Right lobe of liver (tissue), 6 donors: ENCODE measurements at regions of chr7 and their contacts with region 1.

Region 1: GRCh38 chr7:148286150-148286549 is 304.4 kb upstream of the C7orf33 start:
- DNase-seq: no peak
- ATAC-seq: peak; percentile 90 to 95 (median 94)
- H3K4me3 ChIP-seq: no peak overlapping the region
- H3K27ac ChIP-seq: no peak overlapping the region
- H3K4me1 ChIP-seq: no peaks in the 10 kb centered on the region
- H3K27me3 ChIP-seq: no peaks in the 10 kb centered on the region
- CTCF ChIP-seq: peak; percentile 57 to 77 (median 68)
- POLR2A ChIP-seq: no peak

Region 2: GRCh38 chr7:148480479-148481146 is 194.5 kb after region 1 on chr7:
- intact Hi-C with region 1: loop called in 1 of 2 experiments (anchors 5 kb)
- DNase-seq: no peak
- ATAC-seq: peak; percentile 61 to 66 (median 64)
- H3K4me3 ChIP-seq: peak overlapping the region in 2 of 3 donors; percentile 17 to 22
- H3K27ac ChIP-seq: peak overlapping the region in 2 of 3 donors; percentile 63 to 89
- H3K4me1 ChIP-seq: peaks cover 0 to 33% (median 11%) of the 10 kb centered on the region in 4 donors
- H3K27me3 ChIP-seq: no peaks in the 10 kb centered on the region
- CTCF ChIP-seq: no peak
- POLR2A ChIP-seq: no peak